Thyroid gland (tissue), 4 donors: ENCODE measurements at regions of chr2 and their contacts with region 1.

Region 1: GRCh38 chr2:121356058-121356640 is 71.1 kb upstream of the TFCP2L1 start:
- DNase-seq: peak; percentile 60 to 66
- H3K4me3 ChIP-seq: no peak overlapping the region
- H3K27ac ChIP-seq: peak overlapping the region; percentile 55 to 80 (median 72)
- H3K4me1 ChIP-seq: peaks cover 30 to 54% of the 10 kb centered on the region in 2 donors
- H3K27me3 ChIP-seq: no peaks in the 10 kb centered on the region
- CTCF ChIP-seq: peak; percentile 27 to 89 (median 77)
- POLR2A ChIP-seq: no peak

Region 2: DNA sequence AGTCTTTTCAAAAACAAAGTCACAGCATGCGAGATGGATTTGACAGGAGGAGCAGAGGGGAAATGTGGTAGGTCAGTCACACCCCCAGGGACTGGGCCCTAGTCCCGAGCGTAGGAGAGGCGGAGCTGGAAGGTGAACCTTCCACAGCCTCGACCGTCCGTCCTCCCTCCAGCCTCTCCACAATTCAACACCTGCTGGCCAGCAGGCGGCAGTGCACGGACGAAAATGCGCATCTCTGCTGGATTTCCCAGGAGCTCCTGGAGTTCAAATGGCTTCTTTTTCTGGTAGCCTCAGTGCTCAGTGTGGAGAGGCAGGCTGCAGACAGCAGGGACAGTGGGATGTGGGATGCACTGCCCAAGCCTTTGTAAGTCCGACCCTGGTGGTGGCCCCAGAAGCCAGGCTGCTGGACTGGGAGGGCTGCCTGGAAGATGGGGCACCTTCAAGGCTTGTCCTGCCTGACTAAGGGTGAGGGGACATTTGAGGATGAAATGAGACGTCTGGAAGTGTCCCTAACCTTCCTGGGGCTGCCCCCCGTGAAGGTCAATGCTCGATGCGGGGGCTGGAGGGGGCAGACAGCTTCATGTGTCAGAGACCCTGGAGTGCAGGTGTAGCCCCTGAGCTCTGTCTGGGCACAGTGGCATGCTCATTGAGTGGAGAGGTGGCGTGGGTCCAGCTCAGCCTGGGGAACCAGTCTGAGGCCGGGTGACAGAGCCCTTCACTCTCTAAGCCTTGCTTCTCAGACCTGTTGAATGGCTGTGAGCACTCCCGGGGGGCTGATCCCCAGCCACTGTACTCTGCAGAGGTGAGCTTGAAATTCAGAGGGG is 260.7 kb before region 1 on chr2:
- intact Hi-C with region 1: loop called (anchors 5 kb)
- DNase-seq: peak; percentile 76 to 80
- H3K4me3 ChIP-seq: no peak overlapping the region
- H3K27ac ChIP-seq: no peak overlapping the region
- H3K4me1 ChIP-seq: peaks cover 8 to 11% of the 10 kb centered on the region in 2 donors
- H3K27me3 ChIP-seq: no peaks in the 10 kb centered on the region
- CTCF ChIP-seq: peak; percentile 36 to 89 (median 78)
- POLR2A ChIP-seq: no peak

Region 3: DNA sequence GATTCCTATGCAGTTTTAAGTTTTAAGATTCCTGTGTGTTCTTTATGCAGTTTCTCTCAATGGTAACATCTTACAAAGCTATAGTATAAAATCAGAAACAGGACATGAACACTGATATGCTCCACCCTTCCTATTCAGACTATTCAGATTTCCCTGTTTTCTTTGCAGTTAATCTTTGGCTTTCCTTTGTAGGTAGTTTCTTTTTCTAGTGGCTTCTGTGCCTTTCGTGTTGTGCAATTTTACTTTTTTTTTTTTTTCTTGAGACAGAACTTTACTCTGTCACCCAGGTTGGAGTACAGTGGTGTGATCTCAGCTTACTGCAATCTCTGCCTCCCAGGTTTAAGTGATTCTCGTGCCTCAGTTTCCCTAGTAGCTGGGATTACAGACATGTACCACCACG is 79.6 kb after region 1 on chr2:
- intact Hi-C with region 1: no loop called
- DNase-seq: no peak
- H3K4me3 ChIP-seq: no peak overlapping the region
- H3K27ac ChIP-seq: no peak overlapping the region
- H3K4me1 ChIP-seq: no peaks in the 10 kb centered on the region
- H3K27me3 ChIP-seq: no peaks in the 10 kb centered on the region
- CTCF ChIP-seq: no peak
- POLR2A ChIP-seq: no peak